ENCODE measurements at regions of chr2 and their contacts with region 1.

Region 1: GRCh38 chr2:117835990-117836760 is 21.7 kb downstream of the DDX18 start:
- DNase-seq: peak; percentile 92
- ATAC-seq: peak; percentile 99

Region 2: DNA sequence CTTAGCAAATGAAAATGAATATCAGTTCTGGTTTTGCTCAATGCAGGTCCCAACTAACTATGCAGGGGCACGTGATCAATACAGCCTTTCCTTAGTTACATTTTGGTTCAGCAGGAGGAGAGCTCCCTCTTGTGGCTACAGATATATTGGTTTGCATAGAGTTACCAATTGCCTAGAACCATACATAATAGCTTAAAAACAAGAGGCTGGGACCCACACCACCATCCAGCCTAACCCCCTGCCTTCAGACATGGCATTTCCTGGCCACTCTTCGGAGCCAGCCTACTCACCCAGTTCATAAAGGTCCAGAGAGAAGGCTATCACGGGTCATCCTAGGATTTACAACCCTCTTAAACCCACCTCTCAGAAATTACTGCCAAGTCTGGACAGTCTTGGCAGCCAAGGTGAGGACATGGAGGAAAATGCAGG is 167.2 kb after region 1 on chr2:
- intact Hi-C with region 1: loop called (anchors 5 kb)
- DNase-seq: no peak
- ATAC-seq: peak; percentile 97